ENCODE measurements at regions of chr5 and their contacts with region 1.

Region 1: GRCh38 chr5:140346348-140347101 is at the start of gene HBEGF:
- DNase-seq: peak; percentile 94
- ATAC-seq: peak; percentile 65
- H3K4me3 ChIP-seq: peak within 1 kb of the TSS; percentile 98
- H3K27ac ChIP-seq: peak within 1 kb of the TSS; percentile 76
- H3K4me1 ChIP-seq: peaks cover 66% of the 10 kb centered on the region
- H3K27me3 ChIP-seq: no peaks in the 10 kb centered on the region
- CTCF ChIP-seq: peak; percentile 58
- total RNA-seq, gene HBEGF: 82.6 and 85.9 TPM in 2 replicates

Region 2: DNA sequence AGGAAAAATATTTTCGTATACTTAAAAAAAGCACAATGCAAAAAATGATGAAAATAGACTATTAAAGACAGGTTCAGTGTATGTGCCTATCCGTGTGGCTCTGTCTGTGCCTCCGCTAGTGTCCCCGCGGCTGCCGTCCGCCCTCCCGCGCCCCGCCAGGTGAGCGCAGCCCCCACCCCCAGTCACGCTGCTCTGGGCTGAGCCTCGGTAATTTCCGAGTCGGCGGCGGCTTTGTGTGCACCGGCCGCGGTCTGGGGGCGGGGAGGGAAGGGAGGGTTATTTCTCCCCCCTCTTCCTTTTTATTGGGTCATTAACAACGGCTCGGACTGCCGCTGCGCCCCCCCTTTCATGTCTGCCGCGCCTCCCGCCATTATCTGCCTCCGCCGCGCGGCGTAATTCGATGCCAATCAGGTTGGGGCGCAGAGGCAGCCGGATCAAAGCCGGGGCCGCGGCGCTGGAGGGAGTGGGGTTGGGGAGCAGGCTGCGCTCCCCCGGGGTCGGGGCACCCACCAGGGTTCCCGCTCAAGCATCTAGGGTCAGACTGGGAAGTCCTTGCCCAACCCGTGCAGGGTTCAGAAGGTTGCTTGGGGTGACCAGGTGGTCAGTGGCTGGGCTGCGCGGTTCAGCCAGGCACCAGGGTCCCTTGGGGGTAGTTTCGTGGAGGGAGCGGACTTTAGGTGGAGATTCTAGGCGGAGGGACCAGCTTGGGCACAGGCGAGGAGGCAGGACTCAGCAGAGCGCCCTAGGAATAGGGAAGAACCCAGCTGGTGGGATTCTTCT is 590.4 kb before region 1 on chr5:
- CTCF ChIA-PET with region 1: no interaction called
- POLR2A ChIA-PET with region 1: interaction called, 10 read pairs
- intact Hi-C with region 1: no loop called
- DNase-seq: no peak
- ATAC-seq: no peak
- H3K4me3 ChIP-seq: 0 out of 2 replicates have a peak overlapping the region, but pooled peaks have one; percentile 11
- H3K27ac ChIP-seq: no peak overlapping the region
- H3K4me1 ChIP-seq: no peaks in the 10 kb centered on the region
- H3K27me3 ChIP-seq: peaks cover 33% of the 10 kb centered on the region
- CTCF ChIP-seq: no peak

Region 3: GRCh38 chr5:140126315-140127012 is 220.1 kb before region 1 on chr5:
- CTCF ChIA-PET with region 1: no interaction called
- POLR2A ChIA-PET with region 1: no interaction called
- intact Hi-C with region 1: no loop called
- DNase-seq: no peak
- ATAC-seq: no peak
- H3K4me3 ChIP-seq: no peak overlapping the region
- H3K27ac ChIP-seq: no peak overlapping the region
- H3K4me1 ChIP-seq: peaks cover 11% of the 10 kb centered on the region
- H3K27me3 ChIP-seq: no peaks in the 10 kb centered on the region
- CTCF ChIP-seq: no peak

Region 4: GRCh38 chr5:140174465-140175366 is 171.8 kb before region 1 on chr5 and contains the start of gene CYSTM1:
- CTCF ChIA-PET with region 1: interaction called, 4 read pairs
- POLR2A ChIA-PET with region 1: no interaction called
- intact Hi-C with region 1: loop called (anchors 5 kb)
- DNase-seq: peak; percentile 97
- ATAC-seq: peak; percentile 86
- H3K4me3 ChIP-seq: peak within 1 kb of the TSS; percentile 85
- H3K27ac ChIP-seq: peak within 1 kb of the TSS; percentile 59
- H3K4me1 ChIP-seq: peaks cover 29% of the 10 kb centered on the region
- H3K27me3 ChIP-seq: no peaks in the 10 kb centered on the region
- CTCF ChIP-seq: no peak
- total RNA-seq, gene CYSTM1: 24.3 and 43.3 TPM in 2 replicates

Region 5: DNA sequence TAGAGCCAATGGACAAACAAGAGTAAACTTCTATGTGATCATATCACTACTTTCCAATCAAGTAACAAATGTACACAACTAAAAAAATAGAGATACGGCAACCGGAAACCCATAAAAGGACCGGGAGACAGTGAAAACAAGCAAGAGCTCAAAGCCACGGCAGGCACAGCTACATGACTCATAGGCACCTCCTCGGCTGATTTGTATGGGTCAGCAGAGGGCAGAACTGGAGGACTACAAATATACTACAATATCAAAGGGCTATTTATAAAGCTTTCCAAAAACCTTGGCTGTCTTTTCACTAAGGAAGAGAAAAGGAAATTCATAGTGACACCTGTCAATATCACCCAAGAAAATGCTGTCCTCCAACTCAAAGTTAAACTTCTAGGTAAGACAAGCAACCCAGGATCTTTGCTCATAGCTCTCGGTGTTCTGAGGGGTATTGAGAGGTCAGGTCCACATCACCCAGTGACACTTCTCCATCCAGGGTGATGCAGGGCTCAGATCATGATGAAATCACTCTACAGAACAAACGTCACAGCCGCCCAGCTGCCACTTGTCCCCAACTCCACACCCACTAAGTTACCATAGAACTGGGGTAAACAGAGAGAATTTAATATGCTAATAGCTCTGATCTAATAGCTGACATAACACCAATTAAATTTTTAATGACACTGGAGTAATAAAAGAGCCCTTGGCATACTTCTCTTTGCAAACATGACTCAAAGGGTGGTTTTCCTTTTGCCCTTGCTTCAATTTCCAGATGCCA is 84.9 kb before region 1 on chr5:
- CTCF ChIA-PET with region 1: interaction called, 40 read pairs
- POLR2A ChIA-PET with region 1: interaction called, 21 read pairs
- intact Hi-C with region 1: loop called (anchors 1 kb)
- DNase-seq: peak; percentile 86
- ATAC-seq: peak; percentile 92
- H3K4me3 ChIP-seq: peak overlapping the region; percentile 15; the same call in 1 of the 2 replicates
- H3K27ac ChIP-seq: peak overlapping the region; percentile 87
- H3K4me1 ChIP-seq: peaks cover 26% of the 10 kb centered on the region
- H3K27me3 ChIP-seq: no peaks in the 10 kb centered on the region
- CTCF ChIP-seq: peak; percentile 39; the same call in 1 of the 2 replicates

Region 6: GRCh38 chr5:140302786-140303639 is 43.5 kb before region 1 on chr5 and contains the start of gene PFDN1:
- CTCF ChIA-PET with region 1: interaction called, 3 read pairs
- POLR2A ChIA-PET with region 1: interaction called, 6 read pairs
- intact Hi-C with region 1: loop called (anchors 2 kb)
- DNase-seq: peak; percentile 96
- ATAC-seq: peak; percentile 93
- H3K4me3 ChIP-seq: peak within 1 kb of the TSS; percentile 92
- H3K27ac ChIP-seq: peak within 1 kb of the TSS; percentile 73
- H3K4me1 ChIP-seq: peaks cover 38% of the 10 kb centered on the region
- H3K27me3 ChIP-seq: no peaks in the 10 kb centered on the region
- CTCF ChIP-seq: no peak
- total RNA-seq, gene PFDN1: 91.9 and 125 TPM in 2 replicates

Region 7: GRCh38 chr5:140322751-140323731 is 23.5 kb before region 1 on chr5:
- CTCF ChIA-PET with region 1: interaction called, 10 read pairs
- POLR2A ChIA-PET with region 1: interaction called, 9 read pairs
- intact Hi-C with region 1: loop called (anchors 1 kb)
- DNase-seq: peak; percentile 93
- ATAC-seq: peak; percentile 76
- H3K4me3 ChIP-seq: peak overlapping the region; percentile 22; the same call in 1 of the 2 replicates
- H3K27ac ChIP-seq: peak overlapping the region; percentile 98
- H3K4me1 ChIP-seq: peaks cover 54% of the 10 kb centered on the region
- H3K27me3 ChIP-seq: no peaks in the 10 kb centered on the region
- CTCF ChIP-seq: no peak

Region 8: DNA sequence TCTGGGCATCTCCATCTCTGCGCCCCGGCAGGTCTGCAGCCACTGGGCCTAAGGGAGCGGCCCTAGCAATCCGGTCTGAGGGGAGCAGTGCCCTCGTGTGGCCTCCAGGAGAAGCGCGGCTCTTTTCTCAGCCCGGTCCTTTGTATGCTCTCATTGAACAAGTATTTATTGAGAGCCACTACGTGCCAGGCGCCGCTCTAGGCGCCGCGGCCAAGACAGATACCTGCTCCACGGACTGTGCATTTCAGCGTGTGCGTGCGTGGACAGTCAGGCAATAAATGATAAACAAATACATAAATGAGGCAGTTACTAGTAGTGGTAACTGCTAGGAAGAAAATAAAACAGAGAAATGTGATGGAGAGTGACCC is 11.2 kb after region 1 on chr5:
- CTCF ChIA-PET with region 1: interaction called, 15 read pairs
- POLR2A ChIA-PET with region 1: no interaction called
- intact Hi-C with region 1: no loop called
- DNase-seq: peak; percentile 93
- ATAC-seq: peak; percentile 96
- H3K4me3 ChIP-seq: peak overlapping the region; percentile 47; the same call in 1 of the 2 replicates
- H3K27ac ChIP-seq: no peak overlapping the region
- H3K4me1 ChIP-seq: no peaks in the 10 kb centered on the region; the same call in 1 of the 2 replicates
- H3K27me3 ChIP-seq: no peaks in the 10 kb centered on the region
- CTCF ChIP-seq: peak; percentile 94

Region 9: GRCh38 chr5:140647042-140647341 is 300.5 kb after region 1 on chr5:
- CTCF ChIA-PET with region 1: no interaction called
- POLR2A ChIA-PET with region 1: no interaction called
- intact Hi-C with region 1: no loop called
- DNase-seq: no peak
- ATAC-seq: peak; percentile 12
- H3K4me3 ChIP-seq: peak overlapping the region; percentile 94
- H3K27ac ChIP-seq: no peak overlapping the region
- H3K4me1 ChIP-seq: peaks cover 6% of the 10 kb centered on the region; the same call in 1 of the 2 replicates
- H3K27me3 ChIP-seq: no peaks in the 10 kb centered on the region
- CTCF ChIP-seq: no peak